Naive thymus-derived CD8-positive, alpha-beta T cell (primary cell): ENCODE measurements at regions of chr1 and their contacts with region 1.

Region 1: DNA sequence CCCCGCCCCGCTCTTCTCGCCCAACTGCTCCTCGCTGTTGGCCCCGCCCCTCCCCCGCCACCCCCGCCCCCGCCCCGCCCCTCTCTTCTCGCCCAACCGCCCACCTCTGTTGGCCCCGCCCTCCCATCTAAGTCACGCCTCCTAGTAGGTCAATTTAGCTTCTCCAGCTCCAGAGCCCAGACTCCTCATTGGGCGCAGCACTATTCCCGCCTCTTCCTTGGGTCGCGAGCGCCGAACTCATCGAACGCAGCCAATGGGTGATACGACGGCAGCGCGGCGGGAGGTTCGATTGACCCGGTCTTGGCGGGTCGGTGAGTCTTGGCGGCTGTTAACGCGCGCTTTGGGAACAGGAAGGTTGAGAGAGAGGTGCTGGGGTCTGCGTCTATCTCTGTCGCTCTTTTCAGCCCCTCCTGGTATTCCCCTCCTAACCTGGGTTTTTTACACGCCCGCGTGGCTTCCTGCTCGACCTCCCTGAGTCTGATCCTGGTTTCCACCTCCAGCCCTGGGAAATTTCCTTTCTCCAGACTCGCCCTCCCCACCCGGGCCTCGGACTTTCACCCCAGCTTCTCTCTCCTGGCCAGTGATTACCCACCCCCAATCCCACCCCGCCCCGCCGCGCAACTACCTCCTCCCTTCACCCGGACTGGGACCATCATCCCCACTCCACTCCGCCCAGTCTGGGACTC is at the start of gene RAD54L:
- DNase-seq: peak; percentile 88 to 98 (median 94)
- ATAC-seq: peak; percentile 93 to 94
- H3K4me3 Mint-ChIP-seq: peak within 1 kb of the TSS; percentile 82 to 96 (median 92)
- H3K27ac Mint-ChIP-seq: peak within 1 kb of the TSS; percentile 71 to 94 (median 86)
- H3K4me1 Mint-ChIP-seq: peaks cover 8 to 21% (median 19%) of the 10 kb centered on the region in 4 donors
- H3K27me3 Mint-ChIP-seq: no peaks in the 10 kb centered on the region
- polyA plus RNA-seq, gene RAD54L: 0.27 TPM in 1 of 3 donors, not detected in the others

Region 2: DNA sequence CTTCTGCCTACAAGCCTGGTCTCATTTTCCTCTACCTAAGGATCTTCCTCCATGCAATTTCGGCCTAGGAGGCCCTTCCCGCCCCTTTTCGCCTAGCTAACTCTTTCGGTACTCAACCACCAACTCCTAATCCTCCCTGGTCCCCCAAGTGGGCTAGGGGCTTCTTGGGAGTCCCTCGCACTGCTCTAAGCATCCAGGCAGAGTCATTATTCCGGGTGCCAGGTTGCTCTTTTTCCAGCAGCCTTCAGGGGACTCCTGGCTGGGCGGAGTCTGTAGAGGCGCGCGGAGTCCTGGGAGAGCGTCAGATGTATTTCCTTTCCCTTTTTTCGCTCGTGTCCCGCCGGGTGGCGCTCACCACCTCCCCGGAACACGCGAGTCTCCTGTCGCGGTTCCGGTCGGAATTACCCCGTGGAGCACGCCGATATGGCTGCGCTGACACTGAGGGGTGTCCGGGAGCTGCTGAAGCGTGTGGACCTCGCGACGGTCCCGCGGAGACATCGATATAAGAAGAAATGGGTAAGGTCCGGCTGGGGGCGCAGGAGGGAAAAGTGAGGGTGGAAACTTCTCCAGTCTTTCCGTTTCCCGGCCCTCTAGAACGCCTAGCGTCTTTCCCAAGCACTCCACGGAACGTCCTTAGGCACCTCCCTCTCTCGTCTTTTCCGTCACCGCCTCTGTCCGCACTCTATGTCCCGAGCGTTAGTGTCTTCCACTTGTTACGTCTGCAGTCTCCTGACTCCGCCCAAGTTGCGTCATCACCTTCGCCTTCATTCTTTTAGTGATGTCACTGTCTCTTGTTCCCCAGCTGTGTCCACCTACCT is 93.0 kb after region 1 on chr1 and contains the start of gene NSUN4:
- POLR2A ChIA-PET with region 1: interaction called, 11 read pairs
- DNase-seq: peak; percentile 68 to 89 (median 84)
- ATAC-seq: peak; percentile 87 to 88
- H3K4me3 Mint-ChIP-seq: peak within 1 kb of the TSS; percentile 97 to 100 (median 100)
- H3K27ac Mint-ChIP-seq: peak within 1 kb of the TSS; percentile 95 to 100 (median 100)
- H3K4me1 Mint-ChIP-seq: peaks cover 31 to 59% (median 50%) of the 10 kb centered on the region in 4 donors
- H3K27me3 Mint-ChIP-seq: no peaks in the 10 kb centered on the region
- polyA plus RNA-seq, gene NSUN4: 10.3 to 14.0 (median 12.3) TPM